CD4-positive, alpha-beta T cell (primary cell): ENCODE measurements at regions of chr7 and their contacts with region 1.

Region 1: DNA sequence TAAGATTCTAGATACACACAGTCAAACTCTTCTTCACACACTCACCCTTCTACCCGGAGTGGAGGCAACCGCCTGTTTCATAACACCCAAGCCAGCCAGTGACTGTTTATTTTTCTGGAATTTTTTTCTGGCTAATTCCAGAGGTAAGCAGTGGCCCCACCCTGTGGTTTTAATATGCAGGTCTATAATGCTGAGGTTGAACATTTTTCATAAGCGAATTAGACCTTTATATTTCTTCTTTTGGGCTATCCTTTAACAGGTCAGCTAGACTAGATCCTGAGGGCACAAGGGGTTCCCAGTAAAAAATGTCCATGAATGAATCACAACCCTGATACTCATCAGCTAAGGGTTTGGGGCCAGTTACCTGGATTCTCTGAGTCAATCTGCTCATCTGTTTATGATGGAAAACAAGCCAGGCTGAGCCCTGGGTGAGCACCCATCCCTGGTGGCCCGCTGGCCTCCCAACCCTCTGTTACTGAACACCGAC is 76.2 kb downstream of the GRB10 start:
- DNase-seq: no peak
- ATAC-seq: no peak
- H3K4me3 ChIP-seq: no peak overlapping the region
- H3K4me3 Mint-ChIP-seq: no peak overlapping the region
- H3K27ac ChIP-seq: no peak overlapping the region
- H3K27ac Mint-ChIP-seq: no peak overlapping the region
- H3K4me1 ChIP-seq: no peaks in the 10 kb centered on the region
- H3K4me1 Mint-ChIP-seq: no peaks in the 10 kb centered on the region
- H3K27me3 ChIP-seq: no peaks in the 10 kb centered on the region
- H3K27me3 Mint-ChIP-seq: peaks cover 5% of the 10 kb centered on the region
- CTCF ChIP-seq: no peak

Region 2: DNA sequence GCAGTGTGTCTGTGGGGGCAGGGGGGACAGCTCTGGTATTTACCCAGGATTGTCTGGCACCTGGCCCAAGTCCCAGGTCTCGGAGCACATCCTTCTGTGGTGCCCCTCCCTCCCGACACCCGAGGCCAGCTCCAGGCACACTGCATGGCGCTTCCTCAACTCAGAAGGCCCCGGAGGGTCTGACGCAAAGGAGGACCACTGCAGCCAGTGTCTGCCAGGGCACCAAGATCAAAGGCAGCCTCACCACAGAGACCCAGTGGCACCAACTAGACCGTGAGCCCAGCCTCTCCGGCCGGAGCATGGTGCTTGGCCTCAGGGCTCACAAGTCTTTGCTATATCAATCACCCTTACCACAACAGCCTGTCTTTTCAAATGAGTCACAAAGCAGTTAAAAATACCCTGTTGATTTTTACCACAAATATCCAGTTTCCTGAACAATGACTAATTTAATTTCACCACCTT is 42.0 kb before region 1 on chr7:
- CTCF ChIA-PET with region 1: no interaction called
- POLR2A ChIA-PET with region 1: no interaction called
- intact Hi-C with region 1: no loop called
- DNase-seq: peak in 3 of 14 experiments; percentile 7 to 22 (median 7)
- ATAC-seq: no peak
- H3K4me3 ChIP-seq: no peak overlapping the region
- H3K4me3 Mint-ChIP-seq: no peak overlapping the region
- H3K27ac ChIP-seq: no peak overlapping the region
- H3K27ac Mint-ChIP-seq: no peak overlapping the region
- H3K4me1 ChIP-seq: peaks cover 52% of the 10 kb centered on the region
- H3K4me1 Mint-ChIP-seq: peaks cover 50% of the 10 kb centered on the region
- H3K27me3 ChIP-seq: no peaks in the 10 kb centered on the region
- H3K27me3 Mint-ChIP-seq: no peaks in the 10 kb centered on the region
- CTCF ChIP-seq: no peak

Region 3: DNA sequence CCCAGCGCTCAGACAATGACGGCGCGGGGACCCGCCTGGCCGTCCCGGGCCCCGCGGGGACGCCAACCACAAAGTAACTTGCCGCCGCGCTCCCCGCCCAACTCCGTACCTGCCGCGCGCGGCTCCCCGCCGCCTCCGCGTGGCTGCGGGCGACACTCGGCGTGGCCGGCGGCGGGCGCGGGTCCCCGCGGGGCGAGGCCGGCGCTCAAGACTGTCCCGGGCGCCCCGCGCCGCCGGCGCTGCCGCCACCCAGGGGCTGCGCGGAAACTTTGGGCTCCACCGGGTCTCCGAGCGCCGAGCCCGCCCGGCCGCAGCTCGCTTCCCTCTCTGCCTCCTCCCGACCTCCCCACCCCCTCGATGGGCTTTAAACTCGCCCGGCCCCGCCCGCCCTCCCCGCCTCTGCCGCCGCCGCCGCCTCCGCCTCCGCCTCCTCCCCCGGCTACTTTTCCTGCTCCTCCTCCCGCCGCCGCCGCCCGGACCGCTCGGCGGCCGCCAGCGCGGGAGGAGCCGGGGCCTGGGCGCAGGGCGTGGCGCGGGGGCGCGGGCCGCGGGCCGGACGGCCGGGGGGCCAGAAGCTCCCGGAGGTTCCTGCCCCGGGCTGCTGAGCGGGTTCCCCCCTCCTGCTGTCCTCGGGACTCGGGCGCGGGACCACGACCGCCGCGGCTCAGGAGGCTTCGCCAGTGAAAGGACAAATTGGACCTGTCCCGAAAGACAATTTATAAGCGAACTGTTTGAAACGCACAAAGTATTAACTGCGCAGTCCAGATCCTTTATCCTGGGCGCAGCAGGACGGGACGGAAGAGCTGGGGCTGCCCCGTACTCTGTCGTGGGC is 86.8 kb after region 1 on chr7:
- CTCF ChIA-PET with region 1: no interaction called
- POLR2A ChIA-PET with region 1: no interaction called
- intact Hi-C with region 1: loop called in 1 of 2 experiments (anchors 5 kb)
- DNase-seq: peak in 8 of 14 experiments; percentile 28 to 69 (median 40)
- ATAC-seq: peak; percentile 39
- H3K4me3 ChIP-seq: peak overlapping the region; percentile 34
- H3K4me3 Mint-ChIP-seq: peak overlapping the region; percentile 86
- H3K27ac ChIP-seq: no peak overlapping the region
- H3K27ac Mint-ChIP-seq: peak overlapping the region; percentile 8
- H3K4me1 ChIP-seq: peaks cover 18% of the 10 kb centered on the region
- H3K4me1 Mint-ChIP-seq: peaks cover 19% of the 10 kb centered on the region
- H3K27me3 ChIP-seq: peaks cover 25 to 27% of the 10 kb centered on the region in 2 experiments
- H3K27me3 Mint-ChIP-seq: peaks cover 51% of the 10 kb centered on the region
- CTCF ChIP-seq: no peak